ENCODE measurements at regions of chr4 and their contacts with region 1.

Region 1: DNA sequence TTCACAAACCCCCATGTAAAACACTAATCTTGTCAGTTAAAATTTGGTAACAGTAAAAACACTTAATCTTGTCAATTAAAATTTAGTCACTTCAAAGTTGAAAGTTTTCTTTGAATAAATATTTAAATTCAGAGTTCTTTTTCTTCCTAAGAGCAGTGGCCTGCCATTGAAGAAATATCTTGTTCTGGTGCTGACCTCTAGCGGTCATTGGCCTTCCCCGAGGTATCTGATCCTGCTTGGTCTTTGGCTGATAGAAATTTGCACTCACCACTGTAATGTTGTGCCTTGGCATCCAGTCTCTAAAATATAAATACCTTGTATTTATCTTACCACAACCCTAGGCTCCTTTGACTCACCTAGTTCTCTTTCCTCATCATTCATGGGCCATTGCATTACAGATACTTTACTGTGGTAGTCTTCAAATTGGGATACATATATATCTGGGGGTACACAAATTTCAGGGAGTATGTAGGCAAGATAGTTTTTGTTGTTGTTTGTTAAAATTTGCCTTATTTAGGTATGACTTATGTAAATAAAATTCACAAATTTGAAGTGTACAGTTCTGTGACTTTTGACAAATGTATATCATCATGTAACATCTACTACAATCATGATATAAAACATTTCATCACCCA is 6.7 kb upstream of the ART3 start:
- DNase-seq: peak; percentile 62 to 88
- H3K4me3 ChIP-seq: no peak overlapping the region
- CTCF ChIP-seq: no peak
- POLR2A ChIP-seq: no peak

Region 2: DNA sequence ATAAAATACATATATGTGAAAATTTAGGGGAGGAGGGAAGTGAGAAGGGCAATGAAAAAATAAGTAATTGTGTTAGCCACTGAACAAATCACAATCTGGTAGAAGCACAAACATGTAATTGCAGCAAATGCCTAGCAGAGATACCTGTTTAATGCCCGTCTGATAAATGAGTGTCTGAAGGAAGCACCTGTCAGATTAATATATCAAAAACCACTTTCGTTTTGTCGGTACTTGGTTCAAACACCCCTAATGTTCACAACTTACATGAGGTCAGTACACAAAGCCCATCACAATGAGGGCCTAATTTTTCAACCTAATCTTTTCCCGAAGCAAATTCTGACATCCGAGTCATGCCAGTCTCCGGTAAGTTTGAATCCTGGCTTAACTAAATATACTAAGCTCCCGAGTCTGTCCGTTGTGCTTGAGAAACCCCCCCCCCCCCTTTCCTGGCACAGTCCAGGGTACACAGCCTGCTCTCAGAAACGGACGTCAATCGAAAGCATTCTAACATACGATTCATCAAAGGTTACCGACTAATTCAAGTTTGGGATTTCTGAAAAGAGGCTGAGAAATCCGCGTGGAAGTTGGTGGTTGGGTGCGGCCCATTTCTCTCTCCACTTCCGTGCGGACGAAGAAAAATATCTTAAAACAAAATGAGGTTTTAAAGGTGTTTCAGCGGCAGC is 77.8 kb before region 1 on chr4:
- intact Hi-C with region 1: loop called (anchors 5 kb)
- DNase-seq: no peak
- H3K4me3 ChIP-seq: peak overlapping the region; percentile 90
- CTCF ChIP-seq: no peak
- POLR2A ChIP-seq: no peak

Region 3: DNA sequence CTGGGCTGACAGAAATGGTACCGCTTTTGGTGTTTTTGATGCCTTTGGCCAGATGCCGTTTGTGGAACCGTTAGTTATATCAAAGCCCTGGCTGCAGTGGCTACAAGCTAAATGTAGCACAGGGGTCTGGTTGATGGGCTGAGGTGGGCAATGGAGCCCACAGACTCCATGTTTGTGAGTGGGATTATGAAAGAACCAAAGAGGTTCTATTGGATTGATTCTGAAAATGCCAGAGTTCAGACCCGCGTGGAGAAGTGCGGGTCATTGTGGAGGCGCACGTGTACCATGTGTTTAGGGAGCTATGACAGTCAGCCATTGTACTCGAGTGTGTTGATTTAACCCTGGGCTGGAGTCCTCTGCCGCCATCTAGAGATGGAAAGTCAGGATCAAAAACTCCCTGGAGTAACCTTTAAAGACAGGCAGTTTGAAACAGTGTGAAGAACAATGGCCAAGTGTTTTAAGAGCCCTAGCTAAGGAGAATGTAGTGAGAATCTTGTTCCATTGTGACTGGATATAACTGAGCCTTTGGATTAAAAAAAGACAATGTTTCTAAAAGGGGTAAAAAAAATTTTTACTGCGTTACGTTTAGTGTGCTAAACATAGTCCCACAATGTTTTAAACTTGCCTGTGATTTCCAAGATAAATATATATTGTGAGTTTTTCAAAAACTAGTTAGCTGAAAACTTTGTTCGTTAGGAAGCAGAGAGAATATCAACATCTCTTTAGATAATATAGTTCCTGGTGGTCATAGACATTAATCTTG is 19.4 kb after region 1 on chr4:
- intact Hi-C with region 1: no loop called
- DNase-seq: peak in 1 of 2 donors; percentile 24
- H3K4me3 ChIP-seq: no peak overlapping the region
- CTCF ChIP-seq: no peak
- POLR2A ChIP-seq: no peak